ENCODE measurements at regions of chr7 and their contacts with region 1.

Region 1: DNA sequence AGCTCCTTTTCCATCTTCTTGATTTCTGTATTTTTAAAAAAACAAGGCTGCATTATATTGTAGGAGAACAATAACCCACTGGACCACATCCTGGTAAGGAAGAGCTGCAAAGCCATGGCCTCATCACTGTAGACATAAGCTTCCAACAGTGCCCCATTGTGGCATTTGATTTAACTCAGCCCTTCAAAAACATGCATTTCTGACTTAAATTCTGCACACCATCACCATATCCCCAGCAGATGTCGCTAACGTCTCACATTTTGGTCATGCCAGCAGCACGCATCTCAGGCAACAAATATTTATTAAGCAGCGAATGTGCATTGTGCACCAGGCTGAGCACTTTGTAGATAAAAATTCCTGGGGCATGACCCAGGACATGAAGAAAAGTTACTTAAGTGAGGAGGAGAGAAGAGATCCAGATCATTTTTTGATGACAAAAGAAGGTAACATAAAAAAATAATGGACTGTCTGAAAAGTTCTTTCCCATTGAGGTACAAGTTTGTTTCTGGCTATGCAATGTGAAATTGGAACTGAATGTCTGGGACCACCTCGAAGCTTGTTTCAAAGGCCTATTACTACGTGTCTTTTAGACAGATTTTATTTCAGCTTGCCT is 164.6 kb upstream of the CDCA7L start:
- DNase-seq: peak; percentile 36 to 67 (median 53)
- H3K4me3 ChIP-seq: no peak overlapping the region
- H3K4me3 Mint-ChIP-seq: no peak overlapping the region
- H3K27ac ChIP-seq: no peak overlapping the region
- H3K27ac Mint-ChIP-seq: no peak overlapping the region
- H3K4me1 ChIP-seq: no peaks in the 10 kb centered on the region
- H3K4me1 Mint-ChIP-seq: no peaks in the 10 kb centered on the region
- H3K27me3 ChIP-seq: no peaks in the 10 kb centered on the region
- H3K27me3 Mint-ChIP-seq: peaks cover 6 to 15% of the 10 kb centered on the region in 2 donors

Region 2: DNA sequence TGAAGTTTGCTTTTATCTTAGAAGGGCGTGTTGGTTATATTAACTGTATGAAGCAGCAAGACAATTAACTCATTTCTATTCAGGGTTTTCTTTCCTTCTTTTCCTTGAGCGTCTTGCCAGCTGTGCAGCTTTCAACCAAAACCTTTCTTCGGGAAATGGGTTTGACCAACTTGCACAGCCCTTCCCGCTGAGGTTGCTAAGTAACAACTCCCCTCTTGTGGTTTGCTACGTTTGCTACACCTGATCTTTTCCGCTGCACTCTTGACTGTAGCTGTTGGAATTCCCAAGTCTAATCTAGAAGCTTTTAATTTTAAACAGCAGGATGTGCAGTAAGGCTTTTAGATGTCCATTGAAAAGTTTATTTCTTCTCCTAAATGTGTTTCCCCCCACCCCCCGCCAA is 281.5 kb before region 1 on chr7:
- CTCF ChIA-PET with region 1: no interaction called
- POLR2A ChIA-PET with region 1: no interaction called
- DNase-seq: no peak
- H3K4me3 ChIP-seq: no peak overlapping the region
- H3K4me3 Mint-ChIP-seq: no peak overlapping the region
- H3K27ac ChIP-seq: no peak overlapping the region
- H3K27ac Mint-ChIP-seq: no peak overlapping the region
- H3K4me1 ChIP-seq: no peaks in the 10 kb centered on the region
- H3K4me1 Mint-ChIP-seq: peaks cover 0 to 6% (median 5%) of the 10 kb centered on the region in 3 donors
- H3K27me3 ChIP-seq: no peaks in the 10 kb centered on the region
- H3K27me3 Mint-ChIP-seq: peaks cover 9 to 37% of the 10 kb centered on the region in 2 donors

Region 3: GRCh38 chr7:22488643-22489462 is 378.5 kb after region 1 on chr7:
- CTCF ChIA-PET with region 1: interaction called, 15 read pairs
- POLR2A ChIA-PET with region 1: no interaction called
- DNase-seq: peak; percentile 30 to 62 (median 42)
- H3K4me3 ChIP-seq: no peak overlapping the region
- H3K4me3 Mint-ChIP-seq: no peak overlapping the region
- H3K27ac ChIP-seq: no peak overlapping the region
- H3K27ac Mint-ChIP-seq: no peak overlapping the region
- H3K4me1 ChIP-seq: no peaks in the 10 kb centered on the region
- H3K4me1 Mint-ChIP-seq: no peaks in the 10 kb centered on the region
- H3K27me3 ChIP-seq: no peaks in the 10 kb centered on the region
- H3K27me3 Mint-ChIP-seq: peaks cover 6 to 23% of the 10 kb centered on the region in 2 donors

Measured in CD8-positive, alpha-beta memory T cell (primary cell).